OCI-LY7 (cell line): ENCODE measurements at regions of chr17 and their contacts with region 1.

Region 1: GRCh38 chr17:76427501-76428231 is 25.3 kb downstream of the UBE2O start:
- DNase-seq: peak; percentile 90
- H3K4me3 ChIP-seq: peak overlapping the region; percentile 59
- H3K27ac ChIP-seq: peak overlapping the region; percentile 92
- H3K4me1 ChIP-seq: peaks cover 95% of the 10 kb centered on the region
- CTCF ChIP-seq: no peak

Region 2: DNA sequence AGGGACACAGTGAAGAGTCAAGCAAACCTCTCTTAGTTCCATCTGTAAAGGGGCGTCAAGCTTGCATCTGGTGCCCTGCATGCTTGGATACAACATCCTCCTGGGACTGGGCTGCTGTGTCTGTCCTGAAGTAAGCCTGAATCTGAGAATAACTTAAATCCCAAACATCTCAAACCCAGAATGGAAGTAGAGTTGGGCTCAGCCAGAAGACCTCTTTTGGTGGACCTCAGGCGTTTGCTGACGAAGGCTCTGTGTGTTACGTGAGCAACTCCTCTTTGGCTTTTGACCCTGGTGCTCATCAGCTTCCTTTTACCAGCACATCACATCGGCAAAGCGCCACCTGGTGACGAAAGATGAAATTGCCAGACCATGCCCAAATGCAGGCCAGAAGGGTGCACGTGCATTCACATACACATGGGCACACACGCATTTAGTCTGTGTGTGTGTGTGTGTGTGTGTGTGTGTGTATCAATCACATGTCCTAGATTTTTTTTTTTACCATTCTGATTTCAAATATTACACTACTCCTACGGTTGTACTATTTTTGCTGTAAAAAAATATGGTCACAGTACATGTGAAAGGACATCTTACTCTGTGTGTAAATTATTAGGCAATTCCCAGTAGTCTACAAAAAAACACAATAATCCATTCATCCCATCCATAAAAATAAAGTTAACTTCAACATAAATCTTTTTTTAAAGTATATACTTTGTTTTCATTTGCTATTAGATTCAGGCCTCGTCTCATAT is 245.5 kb before region 1 on chr17:
- CTCF ChIA-PET with region 1: no interaction called
- POLR2A ChIA-PET with region 1: no interaction called
- intact Hi-C with region 1: no loop called
- DNase-seq: peak; percentile 95
- H3K4me3 ChIP-seq: no peak overlapping the region
- H3K27ac ChIP-seq: no peak overlapping the region
- H3K4me1 ChIP-seq: peaks cover 28% of the 10 kb centered on the region
- CTCF ChIP-seq: peak; percentile 99

Region 3: GRCh38 chr17:76452660-76453430 is 25.2 kb after region 1 on chr17 and contains the start of gene UBE2O:
- CTCF ChIA-PET with region 1: interaction called, 5 read pairs
- POLR2A ChIA-PET with region 1: interaction called, 9 read pairs
- intact Hi-C with region 1: loop called (anchors 1 kb)
- DNase-seq: peak; percentile 96
- H3K4me3 ChIP-seq: peak within 1 kb of the TSS; percentile 89
- H3K27ac ChIP-seq: peak within 1 kb of the TSS; percentile 20
- H3K4me1 ChIP-seq: peaks cover 38% of the 10 kb centered on the region
- CTCF ChIP-seq: peak; percentile 79
- total RNA-seq, gene UBE2O: 43.4 and 55.1 TPM in 2 replicates

Region 4: DNA sequence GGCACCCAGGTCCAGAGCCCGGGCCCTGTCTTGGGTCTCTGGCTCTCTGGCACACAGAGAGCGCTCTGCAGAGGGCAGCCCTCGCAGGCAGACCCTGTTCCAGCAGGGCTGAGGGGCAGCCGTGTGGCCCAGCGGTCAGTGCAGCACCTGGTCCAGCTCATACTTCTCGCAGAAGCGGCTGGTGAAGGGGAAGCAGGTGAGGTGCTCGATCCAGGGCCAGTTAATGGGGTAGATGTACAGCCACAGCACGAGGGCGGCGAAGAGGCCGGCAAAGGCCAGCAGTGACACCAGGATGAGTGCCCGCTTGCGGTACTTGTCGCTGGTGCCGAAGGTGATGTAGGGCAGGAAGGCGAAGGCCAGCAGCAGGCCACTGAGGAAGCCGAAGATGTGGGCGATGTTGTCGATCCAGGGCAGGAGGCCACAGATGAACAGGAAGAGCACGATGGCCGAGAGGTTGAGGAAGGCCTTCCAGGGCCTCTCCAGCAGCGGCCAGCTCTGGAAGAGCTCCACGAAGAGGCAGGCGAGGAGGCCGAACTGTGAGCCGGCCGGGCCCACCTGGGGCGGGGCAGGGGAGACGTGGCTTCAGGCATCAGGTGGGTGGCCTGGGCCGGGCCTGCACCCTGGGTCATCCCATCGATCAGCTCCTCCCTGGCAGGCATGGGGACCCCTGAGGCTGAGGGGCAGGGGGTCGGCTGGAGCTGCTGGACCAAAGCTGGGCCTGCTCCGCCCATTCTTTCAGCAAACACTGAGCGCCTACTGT is 44.0 kb after region 1 on chr17:
- CTCF ChIA-PET with region 1: no interaction called
- POLR2A ChIA-PET with region 1: no interaction called
- intact Hi-C with region 1: no loop called
- DNase-seq: no peak
- H3K4me3 ChIP-seq: no peak overlapping the region
- H3K27ac ChIP-seq: no peak overlapping the region
- H3K4me1 ChIP-seq: peaks cover 23% of the 10 kb centered on the region
- CTCF ChIP-seq: no peak

Region 5: DNA sequence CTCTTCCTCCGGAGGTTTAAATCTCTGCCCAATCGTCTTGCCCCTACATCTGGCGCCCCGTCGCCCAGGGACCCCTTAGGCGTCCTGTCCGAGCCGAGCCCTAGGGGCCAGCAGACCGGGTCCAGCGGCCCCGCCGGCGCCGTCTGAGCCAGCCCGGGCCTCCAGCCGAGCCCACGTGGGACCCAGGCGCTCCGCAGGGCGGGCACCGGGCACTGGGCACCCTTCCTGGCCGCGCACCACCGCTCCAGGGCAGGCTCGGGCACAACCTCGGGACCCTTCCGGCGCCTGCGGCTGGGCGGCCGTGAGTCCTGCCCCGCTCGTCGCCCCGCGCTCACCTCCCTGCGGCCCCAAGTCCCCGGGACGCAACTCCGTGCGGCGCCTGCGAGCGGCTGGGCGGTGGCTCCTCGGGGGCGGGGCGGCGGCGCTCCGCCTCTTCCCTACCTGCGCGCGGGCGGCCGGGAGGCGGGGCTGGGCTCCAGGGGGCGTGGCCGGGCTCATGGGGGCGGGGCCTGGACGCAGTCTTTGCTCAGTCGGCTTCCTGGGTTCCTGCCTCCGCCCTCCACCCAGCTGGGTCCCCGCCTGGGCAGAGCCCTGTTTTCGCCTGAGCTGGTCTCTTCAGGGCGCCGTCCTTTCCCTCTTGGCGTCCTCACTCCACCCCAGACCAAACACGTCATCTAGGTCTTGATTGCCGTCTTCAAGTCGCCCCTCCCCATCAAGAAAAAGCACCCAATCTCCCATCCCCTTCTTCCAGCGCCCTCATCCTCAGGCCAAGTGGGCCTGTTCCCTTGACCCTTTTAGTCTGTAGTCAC is 73.6 kb after region 1 on chr17 and contains the start of gene RHBDF2:
- CTCF ChIA-PET with region 1: no interaction called
- POLR2A ChIA-PET with region 1: interaction called, 17 read pairs
- intact Hi-C with region 1: no loop called
- DNase-seq: peak; percentile 94
- H3K4me3 ChIP-seq: peak within 1 kb of the TSS; percentile 96
- H3K27ac ChIP-seq: peak within 1 kb of the TSS; percentile 83
- H3K4me1 ChIP-seq: peaks cover 77% of the 10 kb centered on the region
- CTCF ChIP-seq: no peak
- total RNA-seq, gene RHBDF2: 122 and 144 TPM in 2 replicates

Region 6: DNA sequence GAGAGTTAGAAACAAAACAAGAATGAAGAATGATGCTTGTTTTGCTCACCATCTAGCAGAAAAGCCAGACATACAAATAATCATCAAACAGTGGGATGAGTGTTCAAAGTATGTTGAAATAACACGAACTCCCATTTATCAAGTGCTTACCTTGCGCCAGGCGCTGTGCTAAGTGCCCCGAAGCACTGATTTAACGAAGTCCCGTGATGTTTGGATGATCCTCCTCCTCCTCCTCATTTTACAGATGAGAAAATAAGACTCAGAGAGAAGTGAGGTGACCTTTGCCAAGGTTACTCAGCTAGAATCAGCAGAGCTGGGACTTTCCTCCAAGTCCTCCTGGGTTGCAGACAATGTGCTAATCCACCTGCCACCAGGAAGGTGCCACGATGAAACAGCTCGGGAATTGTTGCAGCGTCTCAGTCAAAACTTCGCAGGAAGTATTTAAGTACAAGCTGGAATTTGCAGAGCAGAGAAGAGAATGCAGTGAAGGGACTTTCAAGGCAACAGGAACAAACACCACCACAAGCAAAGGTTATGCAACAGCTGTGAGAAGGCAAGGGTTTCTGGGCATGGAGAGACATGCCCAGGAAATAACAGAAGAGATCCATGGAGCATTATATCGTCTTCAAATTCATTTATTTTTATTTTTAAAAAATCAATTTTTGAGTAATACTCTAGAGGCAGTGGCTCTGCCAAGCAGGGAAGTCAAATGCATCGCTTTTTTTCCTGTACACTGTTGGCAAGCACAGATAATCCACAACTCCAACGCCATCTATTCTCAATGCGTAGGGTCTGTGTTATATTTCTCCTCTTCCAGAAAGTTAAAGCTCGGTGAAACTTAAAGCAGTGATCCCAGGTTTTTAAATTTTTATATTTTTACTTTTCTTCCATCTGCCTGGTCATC is 123.3 kb after region 1 on chr17:
- CTCF ChIA-PET with region 1: no interaction called
- POLR2A ChIA-PET with region 1: no interaction called
- intact Hi-C with region 1: no loop called
- DNase-seq: no peak
- H3K4me3 ChIP-seq: no peak overlapping the region
- H3K27ac ChIP-seq: no peak overlapping the region
- H3K4me1 ChIP-seq: peaks cover 31% of the 10 kb centered on the region
- CTCF ChIP-seq: no peak